Sigmoid colon (tissue), 7 donors: ENCODE measurements at regions of chr1 and their contacts with region 1.

Region 1: GRCh38 chr1:206725109-206725963 is 40.6 kb downstream of the MAPKAPK2 start:
- DNase-seq: peak; percentile 63
- H3K4me3 ChIP-seq: no peak overlapping the region
- H3K27ac ChIP-seq: peak overlapping the region in 1 of 4 donors; percentile 73
- H3K4me1 ChIP-seq: peaks cover 0 to 84% (median 72%) of the 10 kb centered on the region in 4 donors
- H3K27me3 ChIP-seq: no peaks in the 10 kb centered on the region
- CTCF ChIP-seq: peak in 1 of 4 experiments; percentile 42
- EP300 ChIP-seq: no peak
- POLR2A ChIP-seq: no peak

Region 2: DNA sequence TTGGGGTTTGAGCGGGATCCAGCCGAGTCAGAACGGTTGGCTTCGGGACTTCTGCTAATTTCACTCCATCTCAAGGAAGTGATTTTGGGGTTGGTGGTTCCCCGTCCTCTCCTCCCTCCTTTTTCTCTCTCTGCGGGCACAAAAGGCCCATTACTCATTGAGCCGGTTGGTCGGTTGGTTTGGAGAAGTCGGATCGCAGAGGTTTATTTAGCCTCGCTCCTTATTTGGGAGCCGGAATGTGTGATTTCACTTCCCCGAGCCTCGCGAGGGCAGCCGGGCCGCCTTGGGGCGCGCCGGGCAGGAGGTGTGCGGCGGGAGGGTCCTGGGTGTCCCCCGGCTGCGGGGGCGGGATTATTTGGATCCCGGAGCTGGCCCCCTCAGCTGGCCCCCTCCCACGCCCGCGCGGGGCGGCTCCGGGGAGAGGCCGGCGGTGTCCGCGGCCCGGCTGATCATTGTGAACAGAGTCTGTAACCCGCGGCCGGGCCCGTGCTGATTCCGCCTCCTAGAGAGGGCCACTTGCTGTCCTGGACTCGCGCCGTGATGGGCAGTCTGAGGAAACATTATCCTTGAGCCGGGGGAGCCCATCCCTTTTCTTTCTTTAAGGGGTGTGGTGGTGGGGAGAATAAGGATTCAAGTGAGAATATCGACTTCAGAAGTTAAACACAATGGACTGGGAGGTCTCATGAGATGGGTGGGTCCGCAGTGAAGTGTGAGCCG is 39.4 kb before region 1 on chr1:
- intact Hi-C with region 1: no loop called
- DNase-seq: peak; percentile 85
- H3K4me3 ChIP-seq: peak overlapping the region; percentile 73 to 89 (median 78)
- H3K27ac ChIP-seq: peak overlapping the region; percentile 95 to 100 (median 97)
- H3K4me1 ChIP-seq: peaks cover 0 to 54% (median 51%) of the 10 kb centered on the region in 4 donors
- H3K27me3 ChIP-seq: no peaks in the 10 kb centered on the region
- CTCF ChIP-seq: no peak
- EP300 ChIP-seq: no peak
- POLR2A ChIP-seq: peak in 1 of 2 donors; percentile 67

Region 3: DNA sequence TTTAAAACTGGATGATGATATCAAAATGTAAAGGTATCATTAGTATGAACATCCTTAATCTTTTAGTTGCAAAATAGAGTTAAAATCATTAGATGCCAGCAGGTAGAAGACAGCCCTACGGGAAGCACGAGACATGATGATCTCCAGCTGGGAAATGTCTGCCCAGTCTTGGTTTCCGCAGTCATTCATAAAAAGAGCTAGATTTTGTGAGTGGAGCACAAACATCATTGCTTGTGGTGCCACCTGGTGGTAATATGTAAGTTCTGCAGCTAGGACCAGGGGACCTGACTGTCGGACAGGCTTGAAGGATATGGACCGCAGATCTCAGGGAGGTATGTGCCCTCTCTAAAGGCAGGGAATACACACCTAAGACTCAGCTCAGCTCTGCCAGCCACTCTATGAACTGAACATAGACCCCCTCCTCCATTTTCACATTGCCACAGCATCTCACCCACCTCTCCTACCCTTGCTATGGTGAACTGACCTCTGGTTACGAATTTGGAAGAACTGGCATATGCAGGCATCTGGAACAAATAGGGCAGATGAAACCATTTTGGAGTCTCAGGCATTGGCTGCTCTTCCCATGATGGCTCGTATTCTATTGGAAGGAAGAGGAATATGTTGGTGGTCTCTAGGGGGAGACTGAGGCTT is 187.2 kb after region 1 on chr1:
- intact Hi-C with region 1: loop called (anchors 5 kb)
- DNase-seq: peak; percentile 87
- H3K4me3 ChIP-seq: no peak overlapping the region
- H3K27ac ChIP-seq: no peak overlapping the region
- H3K4me1 ChIP-seq: peaks cover 0 to 21% (median 15%) of the 10 kb centered on the region in 4 donors
- H3K27me3 ChIP-seq: peaks cover 0 to 21% (median 14%) of the 10 kb centered on the region in 3 donors
- CTCF ChIP-seq: peak; percentile 54 to 86 (median 82)
- EP300 ChIP-seq: no peak
- POLR2A ChIP-seq: no peak